H1 (cell line): ENCODE measurements at regions of chr2 and their contacts with region 1.

Region 1: GRCh38 chr2:21317131-21317530 is 193.4 kb downstream of the TDRD15 start:
- DNase-seq: peak; percentile 15 to 69
- H3K4me3 ChIP-seq: no peak overlapping the region
- H3K27ac ChIP-seq: no peak overlapping the region
- H3K4me1 ChIP-seq: no peaks in the 10 kb centered on the region
- H3K27me3 ChIP-seq: no peaks in the 10 kb centered on the region
- CTCF ChIP-seq: peak in 2 of 3 experiments; percentile 68 to 70; a peak in 3 of 4 replicates
- EP300 ChIP-seq: no peak
- POLR2A ChIP-seq: no peak
- RAD21 ChIP-seq: peak; percentile 68 to 80

Region 2: GRCh38 chr2:21055879-21056790 is 261.0 kb before region 1 on chr2:
- CTCF ChIA-PET with region 1: interaction called, 12 read pairs
- POLR2A ChIA-PET with region 1: no interaction called
- DNase-seq: no peak
- H3K4me3 ChIP-seq: no peak overlapping the region
- H3K27ac ChIP-seq: no peak overlapping the region
- H3K4me1 ChIP-seq: peaks cover 0 to 4% (median 0%) of the 10 kb centered on the region in 4 experiments; a peak in 1 of 7 replicates
- H3K27me3 ChIP-seq: no peaks in the 10 kb centered on the region
- CTCF ChIP-seq: no peak
- EP300 ChIP-seq: no peak
- POLR2A ChIP-seq: no peak
- RAD21 ChIP-seq: no peak

Region 3: GRCh38 chr2:21103274-21103891 is 213.7 kb before region 1 on chr2:
- CTCF ChIA-PET with region 1: no interaction called
- POLR2A ChIA-PET with region 1: no interaction called
- DNase-seq: no peak
- H3K4me3 ChIP-seq: no peak overlapping the region
- H3K27ac ChIP-seq: no peak overlapping the region
- H3K4me1 ChIP-seq: peaks cover 0 to 3% (median 1%) of the 10 kb centered on the region in 4 experiments; a peak in 4 of 7 replicates
- H3K27me3 ChIP-seq: no peaks in the 10 kb centered on the region
- CTCF ChIP-seq: no peak
- EP300 ChIP-seq: no peak
- POLR2A ChIP-seq: no peak
- RAD21 ChIP-seq: no peak

Region 4: GRCh38 chr2:21223618-21224017 is 93.5 kb before region 1 on chr2:
- CTCF ChIA-PET with region 1: interaction called, 10 read pairs
- POLR2A ChIA-PET with region 1: no interaction called
- DNase-seq: no peak
- H3K4me3 ChIP-seq: no peak overlapping the region
- H3K27ac ChIP-seq: no peak overlapping the region
- H3K4me1 ChIP-seq: no peaks in the 10 kb centered on the region; a peak in 1 of 7 replicates
- H3K27me3 ChIP-seq: no peaks in the 10 kb centered on the region
- CTCF ChIP-seq: no peak
- EP300 ChIP-seq: no peak
- POLR2A ChIP-seq: no peak
- RAD21 ChIP-seq: no peak

Region 5: GRCh38 chr2:21268197-21268877 is 48.8 kb before region 1 on chr2:
- CTCF ChIA-PET with region 1: interaction called, 10 read pairs
- POLR2A ChIA-PET with region 1: no interaction called
- DNase-seq: no peak
- H3K4me3 ChIP-seq: no peak overlapping the region
- H3K27ac ChIP-seq: no peak overlapping the region
- H3K4me1 ChIP-seq: no peaks in the 10 kb centered on the region
- H3K27me3 ChIP-seq: no peaks in the 10 kb centered on the region
- CTCF ChIP-seq: no peak
- EP300 ChIP-seq: no peak
- POLR2A ChIP-seq: no peak
- RAD21 ChIP-seq: no peak

Region 6: DNA sequence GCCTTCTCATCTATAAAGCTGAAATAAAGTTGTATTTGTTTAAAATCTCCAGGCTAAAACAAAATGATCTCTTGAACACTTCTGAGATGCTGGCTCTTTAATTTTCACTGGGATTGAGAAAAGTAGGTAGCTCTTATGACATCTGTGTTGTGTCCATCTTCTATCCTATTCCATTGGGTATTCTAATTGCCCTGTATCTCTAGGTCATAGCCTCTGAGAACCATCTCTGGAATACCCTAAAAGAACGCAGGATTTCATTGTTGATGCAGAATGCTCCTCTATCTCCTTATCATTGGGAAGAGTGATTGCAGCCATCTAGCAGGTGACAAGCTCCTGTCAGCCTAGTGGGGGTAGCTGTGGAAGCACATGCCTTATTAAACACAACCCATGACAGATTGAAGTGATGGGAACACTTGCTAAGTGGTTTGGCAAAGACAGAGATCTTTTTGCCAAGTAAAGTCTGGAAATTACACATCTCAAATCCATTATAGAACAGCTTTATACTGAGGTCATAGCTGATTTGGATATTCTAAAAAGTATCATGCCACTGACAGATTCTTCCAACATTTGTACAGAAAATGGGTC is 15.2 kb before region 1 on chr2:
- CTCF ChIA-PET with region 1: interaction called, 37 read pairs
- POLR2A ChIA-PET with region 1: no interaction called
- DNase-seq: no peak
- H3K4me3 ChIP-seq: no peak overlapping the region
- H3K27ac ChIP-seq: no peak overlapping the region
- H3K4me1 ChIP-seq: no peaks in the 10 kb centered on the region
- H3K27me3 ChIP-seq: no peaks in the 10 kb centered on the region
- CTCF ChIP-seq: no peak
- EP300 ChIP-seq: no peak
- POLR2A ChIP-seq: no peak
- RAD21 ChIP-seq: no peak

Region 7: DNA sequence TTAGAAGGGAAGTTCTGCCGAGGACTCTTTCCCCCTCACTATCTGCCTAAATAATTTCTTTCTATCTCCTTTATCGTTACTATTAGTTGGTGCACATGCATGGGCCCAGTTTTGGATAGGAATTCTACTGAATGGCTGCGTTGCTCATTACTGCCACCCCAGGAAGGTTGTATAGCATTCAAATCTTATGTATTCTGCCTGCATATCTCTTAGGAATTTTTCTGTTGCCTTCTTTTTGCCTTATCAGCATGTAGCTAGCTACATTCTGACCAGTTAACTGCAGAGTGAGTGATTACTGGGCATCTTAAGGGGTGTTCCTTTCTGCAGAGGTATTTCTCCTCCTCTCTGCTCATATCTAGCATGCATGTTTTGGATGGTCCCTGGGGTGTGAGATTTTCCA is 46.2 kb after region 1 on chr2:
- CTCF ChIA-PET with region 1: no interaction called
- POLR2A ChIA-PET with region 1: no interaction called
- DNase-seq: no peak
- H3K4me3 ChIP-seq: no peak overlapping the region
- H3K27ac ChIP-seq: no peak overlapping the region
- H3K4me1 ChIP-seq: no peaks in the 10 kb centered on the region
- H3K27me3 ChIP-seq: no peaks in the 10 kb centered on the region
- CTCF ChIP-seq: no peak
- EP300 ChIP-seq: no peak
- POLR2A ChIP-seq: no peak
- RAD21 ChIP-seq: no peak